ENCODE measurements at regions of chr2 and their contacts with region 1.

Region 1: DNA sequence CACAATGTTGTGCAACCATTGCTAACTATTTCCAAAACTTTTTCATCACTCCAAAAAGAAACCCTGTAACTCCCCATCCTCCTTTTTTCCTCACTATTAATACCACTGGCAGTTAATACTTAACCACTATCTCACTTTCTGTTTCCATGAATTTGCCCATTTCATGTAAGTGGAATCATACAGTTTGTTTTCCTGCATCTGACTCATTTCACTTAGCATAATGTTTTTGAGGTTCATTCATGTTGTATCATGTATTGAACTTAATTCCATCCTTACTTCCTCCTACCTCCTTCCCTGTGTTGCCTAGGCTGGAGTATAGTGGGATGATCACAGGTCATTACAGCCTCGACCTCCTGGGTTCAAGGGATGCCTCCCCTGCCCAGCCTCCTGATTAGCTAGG is 68.3 kb downstream of the FAM117B start:
- DNase-seq: no peak
- ATAC-seq: no peak
- H3K4me3 ChIP-seq: no peak overlapping the region
- H3K4me3 Mint-ChIP-seq: no peak overlapping the region
- H3K27ac ChIP-seq: peak overlapping the region in 1 of 2 donors; percentile 12
- H3K27ac Mint-ChIP-seq: peak overlapping the region; percentile 3
- H3K4me1 ChIP-seq: peaks cover 13 to 26% of the 10 kb centered on the region in 2 donors
- H3K4me1 Mint-ChIP-seq: peaks cover 55% of the 10 kb centered on the region
- H3K27me3 ChIP-seq: no peaks in the 10 kb centered on the region
- H3K27me3 Mint-ChIP-seq: no peaks in the 10 kb centered on the region
- CTCF ChIP-seq: no peak

Region 2: DNA sequence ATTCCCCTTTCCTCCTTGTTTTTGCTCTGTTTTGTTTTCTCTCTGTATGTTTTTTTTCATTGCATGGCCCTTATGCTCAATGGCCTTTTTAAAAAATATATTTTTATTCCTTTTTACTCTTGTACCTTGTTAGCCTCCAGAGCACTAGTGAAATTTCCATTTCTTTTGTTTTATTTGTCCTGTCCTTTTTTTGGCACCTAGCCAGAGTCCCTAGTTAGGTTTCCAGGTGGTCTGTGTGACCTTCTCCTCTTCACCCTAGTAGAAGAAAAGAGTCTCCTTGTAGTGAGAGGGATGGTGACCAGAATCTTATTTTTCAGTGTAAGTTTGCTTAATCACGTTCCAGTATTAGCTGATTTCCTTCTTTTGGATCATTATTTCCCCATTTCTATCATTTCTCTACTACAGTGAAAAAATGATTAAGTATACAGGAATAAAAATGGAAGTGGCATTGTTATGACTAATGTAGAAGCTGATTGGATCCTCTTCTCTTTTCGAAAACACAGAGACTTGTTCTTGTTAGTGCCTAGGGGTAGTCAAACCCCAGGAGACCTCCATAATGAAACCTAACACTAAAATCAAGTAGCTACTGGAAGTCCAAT is 377.5 kb after region 1 on chr2:
- CTCF ChIA-PET with region 1: no interaction called
- POLR2A ChIA-PET with region 1: interaction called, 11 read pairs
- intact Hi-C with region 1: no loop called
- DNase-seq: no peak
- ATAC-seq: no peak
- H3K4me3 ChIP-seq: no peak overlapping the region
- H3K4me3 Mint-ChIP-seq: no peak overlapping the region
- H3K27ac ChIP-seq: no peak overlapping the region
- H3K27ac Mint-ChIP-seq: no peak overlapping the region
- H3K4me1 ChIP-seq: no peaks in the 10 kb centered on the region
- H3K4me1 Mint-ChIP-seq: no peaks in the 10 kb centered on the region
- H3K27me3 ChIP-seq: no peaks in the 10 kb centered on the region
- H3K27me3 Mint-ChIP-seq: no peaks in the 10 kb centered on the region
- CTCF ChIP-seq: no peak

Region 3: DNA sequence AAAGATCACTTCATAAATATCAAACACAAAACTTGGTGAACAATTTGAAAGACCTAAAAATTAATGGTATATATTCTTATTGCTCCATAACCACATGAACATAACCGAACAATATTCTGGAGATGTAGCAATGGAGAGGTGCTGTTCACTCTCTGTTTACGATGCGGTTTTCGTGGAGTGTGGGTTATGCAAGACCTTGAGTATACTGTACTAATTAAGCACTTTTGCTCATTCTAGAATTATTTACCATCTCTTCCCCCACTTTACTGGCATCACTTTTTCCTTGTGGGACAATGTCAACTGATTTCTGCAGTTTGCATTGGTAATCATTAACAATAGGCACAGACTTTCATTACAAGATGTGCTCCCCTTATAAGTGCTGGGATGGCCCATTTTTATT is 734.4 kb after region 1 on chr2:
- CTCF ChIA-PET with region 1: no interaction called
- POLR2A ChIA-PET with region 1: no interaction called
- intact Hi-C with region 1: no loop called
- DNase-seq: no peak
- ATAC-seq: no peak
- H3K4me3 ChIP-seq: no peak overlapping the region
- H3K4me3 Mint-ChIP-seq: no peak overlapping the region
- H3K27ac ChIP-seq: no peak overlapping the region
- H3K27ac Mint-ChIP-seq: no peak overlapping the region
- H3K4me1 ChIP-seq: no peaks in the 10 kb centered on the region
- H3K4me1 Mint-ChIP-seq: no peaks in the 10 kb centered on the region
- H3K27me3 ChIP-seq: no peaks in the 10 kb centered on the region
- H3K27me3 Mint-ChIP-seq: no peaks in the 10 kb centered on the region
- CTCF ChIP-seq: no peak